Prostate gland (tissue), 2 donors: ENCODE measurements at regions of chr2 and their contacts with region 1.

Region 1: GRCh38 chr2:66429071-66429477 is 5.9 kb upstream of the MEIS1 start:
- DNase-seq: peak; percentile 39
- H3K4me3 ChIP-seq: no peak overlapping the region
- H3K27ac ChIP-seq: no peak overlapping the region
- H3K4me1 ChIP-seq: no peaks in the 10 kb centered on the region
- H3K27me3 ChIP-seq: peaks cover 20% of the 10 kb centered on the region
- CTCF ChIP-seq: peak; percentile 63 to 90 (median 70)
- POLR2A ChIP-seq: no peak

Region 2: DNA sequence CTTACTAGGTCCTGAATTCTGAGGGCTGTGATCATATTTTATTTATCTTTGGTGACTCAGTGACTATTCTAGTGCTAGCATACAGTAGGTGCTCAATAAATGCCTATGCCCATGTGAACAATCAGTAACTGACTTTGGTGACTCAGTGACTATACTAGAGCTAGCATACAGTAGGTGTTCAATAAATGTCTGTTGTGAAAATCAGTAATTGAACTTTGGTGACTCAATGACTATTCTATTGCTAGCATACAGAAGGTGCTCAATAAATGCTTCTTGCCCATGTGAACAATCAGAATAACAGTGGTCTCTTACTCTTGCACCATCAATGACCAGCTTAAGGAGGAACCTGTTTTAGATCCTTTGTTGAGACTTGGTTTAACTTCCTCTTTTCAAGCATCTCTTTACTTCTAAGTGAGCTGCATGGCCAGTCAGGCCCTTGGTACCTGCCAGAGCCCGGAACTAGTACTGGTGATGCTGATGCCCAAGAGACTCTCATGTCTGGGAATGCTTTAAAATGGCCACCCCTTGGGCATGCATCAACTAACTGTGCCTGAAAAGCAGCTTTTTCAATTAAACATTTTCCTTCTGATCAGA is 781.7 kb before region 1 on chr2:
- intact Hi-C with region 1: loop called (anchors 10 kb)
- DNase-seq: no peak
- H3K4me3 ChIP-seq: no peak overlapping the region
- H3K27ac ChIP-seq: no peak overlapping the region
- H3K4me1 ChIP-seq: no peaks in the 10 kb centered on the region
- H3K27me3 ChIP-seq: no peaks in the 10 kb centered on the region
- CTCF ChIP-seq: no peak
- POLR2A ChIP-seq: no peak

Region 3: DNA sequence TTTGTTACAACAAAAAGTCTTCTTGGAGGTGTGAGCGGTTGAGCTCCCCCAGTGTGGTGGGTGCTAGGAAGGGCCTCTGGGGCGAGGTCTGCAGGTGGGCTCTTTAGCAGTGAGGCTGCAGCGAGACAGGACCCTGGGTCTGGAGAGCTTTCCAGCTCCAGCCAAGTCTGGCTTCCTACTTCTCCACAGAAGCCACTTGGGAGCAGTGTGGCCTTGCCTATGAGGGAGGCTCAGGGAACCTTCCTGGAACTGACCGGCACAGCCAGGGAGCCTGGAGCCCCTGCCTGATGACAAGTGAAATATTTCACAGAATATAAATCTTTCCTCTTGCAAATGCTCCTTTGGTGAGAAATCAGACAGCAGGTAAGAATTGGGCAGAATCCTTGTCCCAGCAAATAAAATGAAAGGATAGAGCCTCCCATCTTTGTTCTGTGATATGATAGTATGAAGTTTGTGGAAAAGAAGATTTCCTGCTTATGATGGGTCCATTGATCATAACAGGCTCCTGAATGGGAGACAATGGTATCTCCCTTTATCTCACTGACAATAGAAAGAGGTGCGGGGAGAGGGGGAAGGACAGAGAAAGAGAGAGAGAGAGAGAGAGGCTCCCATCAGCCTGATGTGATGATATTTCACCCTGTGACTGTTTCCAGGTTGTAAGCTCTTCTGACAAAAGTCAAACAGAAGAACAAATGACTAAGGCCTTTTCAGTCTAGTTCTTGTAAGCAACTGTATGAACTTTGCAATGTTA is 706.9 kb before region 1 on chr2:
- intact Hi-C with region 1: loop called (anchors 5 kb)
- DNase-seq: no peak
- H3K4me3 ChIP-seq: no peak overlapping the region
- H3K27ac ChIP-seq: no peak overlapping the region
- H3K4me1 ChIP-seq: no peaks in the 10 kb centered on the region
- H3K27me3 ChIP-seq: no peaks in the 10 kb centered on the region
- CTCF ChIP-seq: peak in 2 of 4 experiments; percentile 37 to 48
- POLR2A ChIP-seq: no peak